CD4-positive, alpha-beta memory T cell (primary cell): ENCODE measurements at regions of chr1 and their contacts with region 1.

Region 1: DNA sequence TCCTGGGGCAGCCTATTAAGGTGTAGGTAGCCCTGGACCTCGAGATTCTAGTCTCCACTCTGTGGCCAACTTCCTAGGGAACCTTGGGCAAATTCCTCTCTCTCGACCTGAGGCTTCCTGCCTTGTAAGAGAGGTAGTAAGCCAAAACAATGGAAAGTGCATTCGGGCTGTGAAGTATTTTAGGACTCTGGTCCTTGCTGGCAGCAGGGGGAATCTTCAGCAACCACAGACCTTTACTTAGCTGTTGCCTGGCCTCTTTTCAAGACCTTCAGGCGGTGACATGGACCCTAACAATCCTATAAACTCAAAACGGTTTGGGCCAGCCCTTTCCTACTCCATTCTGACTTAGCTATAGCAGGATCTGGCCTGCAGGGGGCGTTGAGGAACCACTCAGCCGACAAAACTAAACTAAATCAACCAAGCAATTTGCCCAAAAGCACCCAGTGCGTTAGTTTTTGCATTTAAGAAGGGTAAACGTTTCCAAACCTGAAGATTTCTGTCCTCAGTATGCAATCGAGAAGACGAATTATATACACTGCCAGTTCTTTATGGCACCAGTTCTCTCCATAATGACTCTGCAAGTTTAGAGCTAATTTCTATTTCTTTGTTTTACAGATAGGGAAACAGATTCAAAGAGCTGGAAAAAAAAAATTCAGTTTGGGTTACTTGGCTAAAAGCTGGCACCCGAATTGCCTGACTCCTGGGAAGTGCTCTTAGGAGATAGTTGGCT is 10.9 kb upstream of the SESN2 start:
- DNase-seq: peak; percentile 77 to 83 (median 81)
- H3K4me3 ChIP-seq: peak overlapping the region; percentile 2 to 25
- H3K4me3 Mint-ChIP-seq: peak overlapping the region; percentile 75 to 96 (median 88)
- H3K27ac ChIP-seq: peak overlapping the region; percentile 83
- H3K27ac Mint-ChIP-seq: peak overlapping the region; percentile 88 to 99 (median 94)
- H3K4me1 ChIP-seq: peaks cover 57% of the 10 kb centered on the region
- H3K4me1 Mint-ChIP-seq: peaks cover 34 to 56% (median 48%) of the 10 kb centered on the region in 4 donors
- H3K27me3 ChIP-seq: no peaks in the 10 kb centered on the region
- H3K27me3 Mint-ChIP-seq: no peaks in the 10 kb centered on the region

Region 2: DNA sequence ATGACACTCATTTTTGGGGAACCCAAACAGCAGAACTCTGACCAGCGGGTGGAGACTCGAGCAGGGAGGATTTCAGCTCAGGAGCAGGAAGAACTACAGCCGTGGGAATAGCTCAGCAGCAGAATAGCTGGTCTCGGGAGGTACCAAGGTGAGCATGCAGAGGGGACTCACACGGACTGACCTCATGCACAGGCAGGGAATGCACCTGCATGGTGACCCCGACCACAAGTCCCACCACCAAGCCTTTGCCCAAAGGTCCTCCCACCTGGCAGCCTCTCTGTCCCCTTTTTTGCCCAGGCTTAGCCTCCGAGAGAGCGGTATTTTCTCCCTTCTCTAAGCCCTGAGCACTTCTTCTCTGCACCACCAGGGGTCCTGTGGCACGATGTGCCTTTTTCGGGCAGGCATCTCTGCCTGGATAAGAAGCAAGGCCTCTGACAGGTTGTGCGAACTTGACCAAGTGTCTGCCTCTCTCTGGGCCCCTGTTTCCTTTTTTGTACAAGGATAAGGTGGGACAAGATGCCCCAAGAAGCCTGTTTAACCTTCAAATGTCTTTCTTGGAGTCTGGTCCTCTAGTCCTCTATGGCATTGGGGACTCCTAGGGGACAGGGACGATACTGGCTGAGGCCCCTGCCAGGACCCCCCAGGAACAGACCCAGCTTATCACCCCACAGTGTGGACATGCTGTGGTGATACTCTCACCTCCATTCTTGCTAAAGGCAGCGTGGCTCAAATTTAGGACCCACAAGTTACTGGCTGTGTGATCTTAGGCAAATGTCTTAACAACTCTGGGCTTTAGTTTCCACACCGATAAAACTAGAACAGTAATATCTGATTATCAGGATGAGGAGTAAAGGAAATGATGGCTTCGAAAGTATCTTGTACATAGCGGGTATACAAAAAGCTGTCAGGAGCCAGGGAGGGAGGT is 604.5 kb before region 1 on chr1:
- CTCF ChIA-PET with region 1: no interaction called
- POLR2A ChIA-PET with region 1: no interaction called
- intact Hi-C with region 1: no loop called
- DNase-seq: peak; percentile 67 to 74 (median 71)
- H3K4me3 ChIP-seq: no peak overlapping the region
- H3K4me3 Mint-ChIP-seq: peak overlapping the region in 1 of 8 donors; percentile 64
- H3K27ac ChIP-seq: no peak overlapping the region
- H3K27ac Mint-ChIP-seq: peak overlapping the region in 6 of 7 donors; percentile 47 to 90 (median 72)
- H3K4me1 ChIP-seq: peaks cover 12% of the 10 kb centered on the region
- H3K4me1 Mint-ChIP-seq: peaks cover 10 to 22% (median 18%) of the 10 kb centered on the region in 4 donors
- H3K27me3 ChIP-seq: no peaks in the 10 kb centered on the region
- H3K27me3 Mint-ChIP-seq: no peaks in the 10 kb centered on the region

Region 3: GRCh38 chr1:28235755-28236655 is 12.4 kb before region 1 on chr1 and contains the start of gene ATP5IF1:
- CTCF ChIA-PET with region 1: interaction called, 67 read pairs
- POLR2A ChIA-PET with region 1: interaction called, 197 read pairs
- intact Hi-C with region 1: loop called (anchors 1 kb)
- DNase-seq: peak; percentile 92 to 97 (median 95)
- H3K4me3 ChIP-seq: peak within 1 kb of the TSS; percentile 82 to 97
- H3K4me3 Mint-ChIP-seq: peak within 1 kb of the TSS in 2 of 8 donors; percentile 35 to 57
- H3K27ac ChIP-seq: peak within 1 kb of the TSS; percentile 86
- H3K27ac Mint-ChIP-seq: peak within 1 kb of the TSS in 1 of 7 donors; percentile 18
- H3K4me1 ChIP-seq: peaks cover 56% of the 10 kb centered on the region
- H3K4me1 Mint-ChIP-seq: peaks cover 8 to 30% (median 13%) of the 10 kb centered on the region in 4 donors
- H3K27me3 ChIP-seq: no peaks in the 10 kb centered on the region
- H3K27me3 Mint-ChIP-seq: no peaks in the 10 kb centered on the region
- total RNA-seq, gene ATP5IF1: 111 TPM

Region 4: DNA sequence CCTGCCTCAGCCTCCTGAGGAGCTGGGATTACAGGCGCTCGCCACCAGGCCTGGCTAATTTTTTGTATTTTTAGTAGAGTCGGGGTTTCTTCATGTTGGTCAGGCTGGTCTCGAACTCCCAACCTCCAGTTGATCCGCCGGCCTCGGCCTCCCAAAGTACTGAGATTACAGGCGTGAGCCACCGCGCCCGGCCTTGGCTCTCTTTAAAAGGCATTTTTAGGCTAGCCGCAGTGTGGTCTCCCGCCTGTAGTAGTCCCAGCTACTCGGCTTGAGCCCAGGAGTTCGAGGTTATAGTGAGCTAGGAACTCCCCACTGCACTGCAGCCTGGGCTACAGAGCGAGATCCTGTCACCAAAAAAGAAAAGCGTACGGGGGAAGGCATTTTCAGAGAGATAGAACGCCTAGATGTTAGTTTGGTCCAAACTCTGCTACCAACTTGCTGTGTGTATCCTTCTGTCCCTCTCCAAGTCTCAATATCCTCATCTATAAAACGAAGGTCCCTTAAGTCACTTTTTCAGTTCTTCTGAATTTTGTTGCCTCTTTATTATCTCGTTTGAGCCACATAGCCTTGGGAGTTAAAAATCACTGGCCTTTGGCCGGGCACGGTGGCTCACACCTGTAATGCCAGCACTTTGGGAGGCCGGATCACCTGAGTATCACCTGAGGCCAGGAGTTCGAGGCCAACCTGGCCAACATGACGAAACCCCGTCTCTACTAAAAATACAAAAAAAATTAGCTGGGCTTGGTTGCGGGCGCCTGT is 81.1 kb after region 1 on chr1:
- CTCF ChIA-PET with region 1: interaction called, 40 read pairs
- POLR2A ChIA-PET with region 1: interaction called, 128 read pairs
- intact Hi-C with region 1: loop called (anchors 1 kb)
- DNase-seq: no peak
- H3K4me3 ChIP-seq: peak overlapping the region; percentile 51 to 53
- H3K4me3 Mint-ChIP-seq: peak overlapping the region; percentile 94 to 96 (median 95)
- H3K27ac ChIP-seq: peak overlapping the region; percentile 84
- H3K27ac Mint-ChIP-seq: peak overlapping the region; percentile 97 to 100 (median 99)
- H3K4me1 ChIP-seq: peaks cover 29% of the 10 kb centered on the region
- H3K4me1 Mint-ChIP-seq: peaks cover 19 to 39% (median 26%) of the 10 kb centered on the region in 4 donors
- H3K27me3 ChIP-seq: no peaks in the 10 kb centered on the region
- H3K27me3 Mint-ChIP-seq: peaks cover 0 to 2% of the 10 kb centered on the region in 2 donors

Region 5: GRCh38 chr1:28409090-28409489 is 160.6 kb after region 1 on chr1:
- CTCF ChIA-PET with region 1: interaction called, 12 read pairs
- POLR2A ChIA-PET with region 1: interaction called, 5 read pairs
- intact Hi-C with region 1: loop called (anchors 5 kb)
- DNase-seq: no peak
- H3K4me3 ChIP-seq: no peak overlapping the region
- H3K4me3 Mint-ChIP-seq: no peak overlapping the region
- H3K27ac ChIP-seq: no peak overlapping the region
- H3K27ac Mint-ChIP-seq: no peak overlapping the region
- H3K4me1 ChIP-seq: peaks cover 11% of the 10 kb centered on the region
- H3K4me1 Mint-ChIP-seq: peaks cover 0 to 12% (median 6%) of the 10 kb centered on the region in 4 donors
- H3K27me3 ChIP-seq: no peaks in the 10 kb centered on the region
- H3K27me3 Mint-ChIP-seq: no peaks in the 10 kb centered on the region

Region 6: DNA sequence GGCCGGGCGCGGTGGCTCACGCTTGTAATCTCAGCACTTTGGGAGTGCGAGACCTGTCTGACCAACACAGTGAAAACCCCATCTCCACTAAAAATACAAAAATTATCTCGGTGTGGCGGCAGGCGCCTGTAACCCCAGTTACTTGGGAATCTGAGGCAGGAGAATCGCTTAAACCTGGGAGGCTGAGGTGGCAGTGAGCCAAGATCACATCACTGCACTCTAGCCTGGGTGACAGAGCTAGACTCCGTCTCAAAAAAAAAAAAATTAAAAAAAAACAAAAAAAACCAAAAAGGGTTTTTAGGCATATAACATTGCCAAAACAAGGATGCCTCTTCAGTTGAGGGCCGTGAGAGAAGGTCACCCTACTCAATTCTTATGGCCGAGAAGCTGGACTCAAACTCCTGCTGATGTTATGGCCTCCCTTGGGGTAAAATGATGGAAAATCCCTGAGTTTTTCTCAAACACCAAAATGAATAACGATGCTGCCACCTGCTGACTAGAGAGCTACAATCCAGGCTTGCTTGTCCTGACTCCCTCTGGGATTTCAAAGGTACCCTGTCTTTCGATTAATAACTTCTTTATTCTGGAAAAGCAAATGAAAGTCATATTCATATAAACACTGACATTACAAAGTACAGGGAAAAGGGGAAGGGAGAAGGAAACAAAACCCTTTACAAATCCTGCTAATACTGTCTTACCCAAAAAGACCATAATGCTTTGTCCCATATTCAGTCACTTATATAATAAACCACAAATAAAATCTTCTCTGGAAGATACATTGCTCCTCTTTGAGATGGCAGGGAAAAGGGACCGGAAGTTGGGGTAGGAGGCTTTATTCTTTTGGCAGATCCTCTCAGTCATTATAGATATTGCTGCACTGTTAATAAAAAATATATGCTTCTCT is 354.3 kb after region 1 on chr1:
- CTCF ChIA-PET with region 1: interaction called, 7 read pairs
- POLR2A ChIA-PET with region 1: no interaction called
- intact Hi-C with region 1: loop called (anchors 5 kb)
- DNase-seq: peak in 3 of 5 donors; percentile 13 to 28 (median 25)
- H3K4me3 ChIP-seq: no peak overlapping the region
- H3K4me3 Mint-ChIP-seq: no peak overlapping the region
- H3K27ac ChIP-seq: no peak overlapping the region
- H3K27ac Mint-ChIP-seq: peak overlapping the region in 2 of 7 donors; percentile 10 to 77
- H3K4me1 ChIP-seq: no peaks in the 10 kb centered on the region
- H3K4me1 Mint-ChIP-seq: peaks cover 0 to 2% (median 0%) of the 10 kb centered on the region in 4 donors
- H3K27me3 ChIP-seq: no peaks in the 10 kb centered on the region
- H3K27me3 Mint-ChIP-seq: no peaks in the 10 kb centered on the region

Region 7: GRCh38 chr1:28877132-28877781 is 628.8 kb after region 1 on chr1:
- CTCF ChIA-PET with region 1: interaction called, 18 read pairs
- POLR2A ChIA-PET with region 1: no interaction called
- intact Hi-C with region 1: loop called (anchors 1 kb)
- DNase-seq: peak; percentile 68 to 75 (median 71)
- H3K4me3 ChIP-seq: no peak overlapping the region
- H3K4me3 Mint-ChIP-seq: no peak overlapping the region
- H3K27ac ChIP-seq: no peak overlapping the region
- H3K27ac Mint-ChIP-seq: peak overlapping the region in 3 of 7 donors; percentile 32 to 57 (median 42)
- H3K4me1 ChIP-seq: peaks cover 5% of the 10 kb centered on the region
- H3K4me1 Mint-ChIP-seq: peaks cover 6 to 10% (median 7%) of the 10 kb centered on the region in 4 donors
- H3K27me3 ChIP-seq: no peaks in the 10 kb centered on the region
- H3K27me3 Mint-ChIP-seq: peaks cover 1 to 7% of the 10 kb centered on the region in 2 donors